ENCODE measurements at regions of chr22 and their contacts with region 1.

Region 1: DNA sequence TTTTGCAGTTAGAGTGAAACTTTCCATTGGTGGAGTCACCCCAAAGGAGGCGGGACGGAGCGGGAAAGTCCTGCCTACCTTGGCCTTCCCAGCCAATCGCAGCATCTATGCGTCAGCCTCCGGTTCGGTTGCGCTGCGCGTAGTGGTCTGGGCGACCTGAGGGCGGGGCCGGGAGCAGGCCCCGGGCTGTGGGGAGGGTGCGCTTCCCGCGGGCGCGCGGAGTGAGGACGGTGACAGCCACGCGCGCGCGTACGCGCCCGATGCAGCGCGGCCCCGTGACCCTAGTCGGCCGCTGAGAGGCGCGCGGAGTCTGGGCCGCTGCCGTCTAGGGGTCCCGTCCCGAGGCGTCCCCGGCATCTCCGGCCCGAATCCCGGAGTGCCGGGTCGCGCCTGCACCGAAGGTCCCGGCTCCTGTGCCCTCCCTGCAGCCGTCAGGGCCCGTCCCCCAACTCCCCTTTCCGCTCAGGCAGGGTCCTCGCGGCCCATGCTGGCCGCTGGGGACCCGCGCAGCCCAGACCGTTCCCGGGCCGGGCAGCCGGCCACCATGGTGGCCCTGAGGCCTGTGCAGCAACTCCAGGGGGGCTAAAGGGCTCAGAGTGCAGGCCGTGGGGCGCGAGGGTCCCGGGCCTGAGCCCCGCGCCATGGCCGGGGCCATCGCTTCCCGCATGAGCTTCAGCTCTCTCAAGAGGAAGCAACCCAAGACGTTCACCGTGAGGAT is at the start of gene NF2:
- DNase-seq: peak; percentile 98 to 99 (median 99)
- H3K4me3 ChIP-seq: peak within 1 kb of the TSS; percentile 79 to 88
- H3K4me3 Mint-ChIP-seq: peak within 1 kb of the TSS; percentile 90 to 99 (median 96)
- H3K27ac ChIP-seq: peak within 1 kb of the TSS; percentile 88
- H3K27ac Mint-ChIP-seq: peak within 1 kb of the TSS; percentile 80 to 98 (median 97)
- H3K4me1 ChIP-seq: peaks cover 21% of the 10 kb centered on the region
- H3K4me1 Mint-ChIP-seq: peaks cover 11 to 39% (median 21%) of the 10 kb centered on the region in 4 donors
- H3K27me3 ChIP-seq: no peaks in the 10 kb centered on the region
- H3K27me3 Mint-ChIP-seq: no peaks in the 10 kb centered on the region
- total RNA-seq, gene NF2: 28.3 to 31.4 TPM

Region 2: DNA sequence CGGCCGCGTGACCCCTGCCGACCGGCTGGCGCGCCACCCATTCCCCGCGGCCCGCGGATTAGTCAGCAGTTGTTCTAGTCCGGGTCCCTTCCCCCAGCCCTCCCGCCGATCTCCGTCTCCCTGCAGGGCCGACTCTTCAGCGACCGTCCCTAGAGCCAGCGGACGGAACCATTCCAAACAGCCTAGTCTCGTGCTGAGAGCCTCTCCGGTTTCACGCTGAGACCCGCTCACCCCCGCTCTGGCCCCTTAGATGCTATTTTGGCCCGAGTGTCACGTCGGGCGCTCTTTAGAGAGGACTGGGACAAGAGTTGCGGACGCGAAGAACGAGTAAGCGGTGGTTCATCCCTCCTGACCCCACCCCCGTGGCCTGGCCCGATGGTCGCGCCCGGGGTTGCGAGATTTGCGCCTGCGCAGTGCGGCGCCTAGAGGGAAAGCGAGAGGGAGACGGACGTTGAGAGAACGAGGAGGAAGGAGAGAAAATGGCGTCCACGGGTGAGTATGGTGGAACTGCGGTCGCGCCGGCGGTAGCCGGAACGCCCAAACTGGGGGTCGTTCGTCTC is 335.6 kb before region 1 on chr22 and contains the starts of genes EWSR1 and RHBDD3:
- CTCF ChIA-PET with region 1: no interaction called
- POLR2A ChIA-PET with region 1: interaction called, 4 read pairs
- intact Hi-C with region 1: loop called (anchors 5 kb)
- DNase-seq: peak; percentile 95 to 100 (median 96)
- H3K4me3 ChIP-seq: peak within 1 kb of the TSS; percentile 78 to 79
- H3K4me3 Mint-ChIP-seq: peak within 1 kb of the TSS; percentile 91 to 99 (median 98)
- H3K27ac ChIP-seq: peak within 1 kb of the TSS; percentile 99
- H3K27ac Mint-ChIP-seq: peak within 1 kb of the TSS; percentile 97 to 100 (median 99)
- H3K4me1 ChIP-seq: peaks cover 54% of the 10 kb centered on the region
- H3K4me1 Mint-ChIP-seq: peaks cover 37 to 63% (median 47%) of the 10 kb centered on the region in 4 donors
- H3K27me3 ChIP-seq: no peaks in the 10 kb centered on the region
- H3K27me3 Mint-ChIP-seq: no peaks in the 10 kb centered on the region
- total RNA-seq, gene EWSR1: 247 to 250 TPM
- total RNA-seq, gene RHBDD3: 14.2 to 16.1 TPM

Region 3: GRCh38 chr22:29580200-29580810 is 23.2 kb before region 1 on chr22:
- CTCF ChIA-PET with region 1: interaction called, 3 read pairs
- POLR2A ChIA-PET with region 1: interaction called, 8 read pairs
- intact Hi-C with region 1: loop called (anchors 1 kb)
- DNase-seq: peak in 1 of 5 donors; percentile 5
- H3K4me3 ChIP-seq: peak overlapping the region in 1 of 2 donors; percentile 61
- H3K4me3 Mint-ChIP-seq: peak overlapping the region; percentile 90 to 97 (median 95)
- H3K27ac ChIP-seq: peak overlapping the region; percentile 58
- H3K27ac Mint-ChIP-seq: peak overlapping the region; percentile 85 to 95 (median 94)
- H3K4me1 ChIP-seq: peaks cover 14% of the 10 kb centered on the region
- H3K4me1 Mint-ChIP-seq: peaks cover 5 to 26% (median 14%) of the 10 kb centered on the region in 4 donors
- H3K27me3 ChIP-seq: no peaks in the 10 kb centered on the region
- H3K27me3 Mint-ChIP-seq: no peaks in the 10 kb centered on the region

Region 4: DNA sequence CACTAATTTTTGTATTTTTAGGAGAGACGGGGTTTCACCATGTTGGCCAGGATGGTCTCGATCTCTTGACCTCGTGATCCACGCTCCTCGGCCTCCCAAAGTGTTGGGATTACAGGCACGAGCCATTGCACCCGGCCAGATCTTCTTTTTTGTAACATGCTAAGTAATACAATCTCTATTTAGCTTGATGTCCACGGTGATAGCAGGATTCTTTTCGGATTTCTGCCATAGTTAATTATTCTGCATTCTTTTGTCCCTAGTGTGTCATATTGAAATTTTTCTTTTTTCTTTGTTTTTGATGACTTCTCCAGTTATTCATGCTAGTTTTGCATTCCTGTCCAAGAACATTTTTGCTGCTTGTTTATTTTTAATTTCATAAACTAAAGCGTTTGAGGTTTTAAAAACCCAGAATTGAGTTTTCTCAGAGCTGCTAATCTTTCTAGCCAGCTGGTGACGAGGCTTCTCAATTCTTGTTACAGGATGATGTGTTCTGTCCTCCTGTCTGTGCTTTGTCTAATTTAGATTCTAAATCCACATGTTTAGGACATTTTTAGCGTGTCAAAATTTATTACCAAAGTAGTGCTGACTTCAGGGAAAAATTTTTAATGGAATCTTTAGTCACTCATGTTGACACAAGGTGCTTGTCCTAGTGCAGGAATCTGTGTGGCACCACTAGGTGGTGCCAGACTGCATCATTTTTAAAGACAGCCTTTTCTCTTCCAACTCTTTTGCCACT is 21.7 kb after region 1 on chr22:
- CTCF ChIA-PET with region 1: interaction called, 34 read pairs
- POLR2A ChIA-PET with region 1: interaction called, 8 read pairs
- intact Hi-C with region 1: loop called (anchors 1 kb)
- DNase-seq: peak in 4 of 5 donors; percentile 33 to 48 (median 38)
- H3K4me3 ChIP-seq: no peak overlapping the region
- H3K4me3 Mint-ChIP-seq: peak overlapping the region in 3 of 8 donors; percentile 6 to 47 (median 6)
- H3K27ac ChIP-seq: no peak overlapping the region
- H3K27ac Mint-ChIP-seq: peak overlapping the region in 6 of 7 donors; percentile 8 to 88 (median 48)
- H3K4me1 ChIP-seq: peaks cover 41% of the 10 kb centered on the region
- H3K4me1 Mint-ChIP-seq: peaks cover 49 to 82% (median 64%) of the 10 kb centered on the region in 4 donors
- H3K27me3 ChIP-seq: no peaks in the 10 kb centered on the region
- H3K27me3 Mint-ChIP-seq: no peaks in the 10 kb centered on the region

Region 5: GRCh38 chr22:29883045-29883774 is 279.7 kb after region 1 on chr22 and contains the start of gene MTMR3:
- CTCF ChIA-PET with region 1: no interaction called
- POLR2A ChIA-PET with region 1: no interaction called
- intact Hi-C with region 1: loop called (anchors 1 kb)
- DNase-seq: peak; percentile 82 to 91 (median 86)
- H3K4me3 ChIP-seq: peak within 1 kb of the TSS; percentile 45 to 83
- H3K4me3 Mint-ChIP-seq: peak within 1 kb of the TSS; percentile 85 to 93 (median 91)
- H3K27ac ChIP-seq: peak within 1 kb of the TSS; percentile 82
- H3K27ac Mint-ChIP-seq: peak within 1 kb of the TSS; percentile 73 to 93 (median 89)
- H3K4me1 ChIP-seq: peaks cover 39% of the 10 kb centered on the region
- H3K4me1 Mint-ChIP-seq: peaks cover under 1 to 14% (median 8%) of the 10 kb centered on the region in 4 donors
- H3K27me3 ChIP-seq: no peaks in the 10 kb centered on the region
- H3K27me3 Mint-ChIP-seq: no peaks in the 10 kb centered on the region
- total RNA-seq, gene MTMR3: 65.3 to 68.6 TPM

Region 6: DNA sequence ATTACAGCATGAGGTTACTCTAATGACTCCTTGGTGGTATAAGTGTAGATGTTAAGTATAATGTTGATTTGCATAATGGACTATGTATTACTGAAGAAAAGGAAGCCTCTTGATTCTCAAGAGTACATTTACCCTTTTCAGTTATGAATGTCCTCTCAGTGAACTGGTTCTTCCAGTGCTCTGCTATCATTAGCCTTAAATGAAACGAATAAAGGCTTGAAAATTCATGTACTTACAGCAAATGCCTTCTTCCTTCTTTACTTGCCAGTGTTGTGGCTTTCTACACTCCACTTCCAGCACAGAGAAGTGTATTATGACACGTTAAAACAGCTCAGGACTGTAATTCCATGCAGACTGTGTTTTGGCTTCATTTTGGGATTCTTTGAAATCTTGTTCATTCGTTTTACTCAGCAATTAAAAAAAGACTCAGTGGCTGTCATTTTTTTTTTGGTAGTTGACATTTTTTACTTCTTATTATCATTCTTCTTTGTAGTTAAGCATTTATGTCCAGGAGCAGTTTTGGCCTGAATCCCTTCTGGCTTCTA is 376.3 kb after region 1 on chr22:
- CTCF ChIA-PET with region 1: no interaction called
- POLR2A ChIA-PET with region 1: no interaction called
- intact Hi-C with region 1: no loop called
- DNase-seq: no peak
- H3K4me3 ChIP-seq: no peak overlapping the region
- H3K4me3 Mint-ChIP-seq: no peak overlapping the region
- H3K27ac ChIP-seq: no peak overlapping the region
- H3K27ac Mint-ChIP-seq: peak overlapping the region in 1 of 7 donors; percentile 19
- H3K4me1 ChIP-seq: no peaks in the 10 kb centered on the region
- H3K4me1 Mint-ChIP-seq: peaks cover 0 to 4% (median 1%) of the 10 kb centered on the region in 4 donors
- H3K27me3 ChIP-seq: no peaks in the 10 kb centered on the region
- H3K27me3 Mint-ChIP-seq: no peaks in the 10 kb centered on the region

Measured in CD4-positive, alpha-beta memory T cell (primary cell).